ENCODE measurements at regions of chr1 and their contacts with region 1.

Region 1: DNA sequence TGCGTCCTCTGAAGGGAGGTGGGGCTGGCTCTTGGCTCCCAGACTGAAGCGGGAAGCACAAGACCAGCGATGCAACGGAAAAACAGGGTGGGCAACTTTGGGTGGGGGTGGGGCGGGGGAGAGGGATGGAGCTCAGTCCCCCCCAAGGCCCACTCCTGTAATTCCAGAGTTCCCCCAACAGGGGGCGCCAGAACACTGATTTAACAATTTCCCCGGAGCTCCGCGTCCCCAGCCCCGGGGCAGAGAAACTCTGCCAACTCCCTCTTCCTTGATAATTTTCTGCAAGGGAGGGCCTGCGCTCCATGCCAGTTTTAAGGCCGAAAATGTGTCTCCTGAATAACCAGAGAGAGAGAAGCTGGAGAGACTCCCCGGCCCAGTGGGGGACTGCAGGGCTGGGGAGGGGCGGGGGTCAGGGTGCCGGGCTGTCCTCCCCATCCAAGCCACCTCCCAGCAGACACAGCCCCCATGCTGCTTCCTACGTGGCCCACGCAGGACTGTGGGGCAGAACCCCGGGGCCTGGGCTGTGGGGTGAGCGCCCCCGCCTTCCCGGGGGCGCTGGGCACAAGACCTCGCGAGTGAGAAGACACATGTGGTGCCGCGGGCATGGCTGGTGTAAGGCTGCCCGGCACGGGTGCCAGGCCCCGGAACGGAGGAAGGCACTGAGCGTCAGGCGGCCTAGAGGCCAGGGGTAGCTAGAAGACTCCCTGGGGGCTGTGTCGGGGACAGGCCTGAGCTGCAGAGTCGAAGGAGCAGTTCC is 51.4 kb downstream of the KIF21B start:
- DNase-seq: peak; percentile 92

Region 2: GRCh38 chr1:200610846-200611245 is 361.3 kb before region 1 on chr1:
- intact Hi-C with region 1: loop called in 1 of 2 experiments (anchors 5 kb)
- DNase-seq: no peak

Region 3: GRCh38 chr1:200992382-200993048 is 20.4 kb after region 1 on chr1:
- intact Hi-C with region 1: no loop called
- DNase-seq: no peak

Region 4: GRCh38 chr1:201042779-201043461 is 70.8 kb after region 1 on chr1:
- intact Hi-C with region 1: loop called (anchors 1 to 5 kb)
- DNase-seq: peak; percentile 87

Region 5: DNA sequence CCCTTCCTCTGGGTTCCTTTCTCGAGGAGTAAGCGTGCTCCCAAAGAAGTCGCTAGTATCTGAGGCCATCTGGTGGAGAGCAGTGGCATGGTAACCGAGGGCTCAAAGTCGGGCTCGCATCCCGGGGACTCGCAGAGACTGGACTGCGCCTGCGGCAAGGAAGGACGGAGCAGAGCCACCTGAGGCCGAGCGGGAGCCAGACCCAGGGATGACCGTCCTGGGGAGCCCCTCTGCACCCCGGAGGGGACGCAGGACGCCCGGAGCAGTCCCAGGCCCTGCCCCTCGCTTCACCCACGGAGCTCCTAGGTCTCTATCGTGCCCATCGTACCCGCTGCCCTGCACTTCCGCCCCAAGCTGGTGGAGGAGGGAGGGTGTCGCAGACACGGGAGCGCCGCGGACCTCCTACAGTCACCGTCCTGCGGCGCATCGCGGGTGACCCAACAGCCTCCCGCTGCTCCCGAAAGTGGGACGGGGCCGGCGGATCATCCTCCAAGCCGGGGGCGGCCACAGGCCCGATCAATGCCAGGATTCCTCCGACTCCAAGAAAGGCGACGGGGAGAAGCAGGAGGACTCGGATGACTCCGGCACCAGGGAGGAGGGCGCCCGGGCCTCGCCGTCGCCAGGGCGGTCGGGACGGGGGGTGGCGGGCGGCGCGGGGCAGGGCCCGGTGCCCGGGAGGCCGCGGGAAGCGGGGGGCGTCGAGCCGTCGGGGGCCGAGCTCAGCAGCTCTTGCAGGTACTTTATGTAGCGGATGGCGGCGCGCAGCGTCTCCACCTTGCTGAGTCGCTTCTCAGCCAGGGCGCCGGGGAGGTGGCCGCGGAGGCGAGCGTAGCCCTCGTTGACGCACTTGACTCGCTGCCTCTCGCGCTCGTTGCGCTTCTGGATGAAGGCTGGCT is 142.4 kb after region 1 on chr1:
- intact Hi-C with region 1: loop called (anchors 5 kb)
- DNase-seq: peak; percentile 94

Region 6: GRCh38 chr1:201154389-201155165 is 182.4 kb after region 1 on chr1 and contains the start of gene TMEM9:
- intact Hi-C with region 1: no loop called
- DNase-seq: peak; percentile 99
- total RNA-seq, gene TMEM9: 35.5 to 54.9 TPM

Region 7: DNA sequence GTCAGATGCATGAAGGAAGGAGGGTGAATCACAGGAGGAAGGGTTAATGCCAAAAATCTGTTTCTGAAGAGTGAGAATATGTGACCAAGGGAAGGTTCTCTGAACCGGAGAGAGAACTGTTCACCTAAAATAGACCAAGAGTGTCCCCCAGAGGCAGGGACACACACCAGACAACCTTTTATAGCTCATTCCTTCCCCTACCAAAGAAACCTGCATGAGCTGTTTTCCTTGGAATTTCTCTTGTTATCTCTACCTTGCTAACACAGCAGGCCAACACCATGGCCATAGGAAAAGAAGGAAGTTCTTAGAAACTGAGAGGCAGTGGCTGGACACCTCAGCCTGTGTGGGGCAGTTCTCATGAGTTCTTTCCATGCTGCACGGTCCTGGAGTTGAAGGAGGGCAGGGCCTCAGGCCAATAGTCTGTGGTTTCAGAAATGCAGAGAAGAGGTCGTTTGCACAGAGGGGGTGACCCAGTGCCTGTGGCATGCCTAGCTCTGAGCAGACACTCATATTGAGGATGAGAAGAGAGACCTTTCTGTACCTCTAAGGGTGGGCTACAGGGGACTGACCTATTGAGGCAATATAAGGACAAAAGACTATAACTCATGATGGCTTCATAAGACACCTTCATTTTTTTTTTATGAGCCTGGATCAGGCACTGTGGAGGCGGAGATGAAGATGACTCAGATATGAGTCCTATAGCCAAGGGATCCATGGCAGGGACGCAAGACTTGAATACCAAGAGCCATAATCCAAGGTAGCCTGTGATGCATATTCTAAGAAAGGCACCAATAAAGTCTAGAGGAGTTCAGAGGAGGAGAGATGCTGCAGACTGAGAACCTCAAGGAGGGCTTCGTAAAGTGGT is 257.9 kb after region 1 on chr1:
- intact Hi-C with region 1: loop called in 1 of 2 experiments (anchors 10 kb)
- DNase-seq: peak; percentile 47